GM12878 (cell line): ENCODE measurements at regions of chr1 and their contacts with region 1.

Region 1: GRCh38 chr1:63316984-63317816 is 5.2 kb upstream of the FOXD3 start:
- DNase-seq: no peak
- ATAC-seq: peak; percentile 96
- H3K4me3 ChIP-seq: peak overlapping the region; percentile 69
- H3K27ac ChIP-seq: no peak overlapping the region
- H3K4me1 ChIP-seq: no peaks in the 10 kb centered on the region
- H3K27me3 ChIP-seq: peaks cover 9 to 35% of the 10 kb centered on the region in 2 experiments
- CTCF ChIP-seq: peak; percentile 60 to 87 (median 66)
- EP300 ChIP-seq: no peak
- POLR2A ChIP-seq: no peak
- RAD21 ChIP-seq: peak; percentile 35; the same call in 1 of the 2 replicates

Region 2: DNA sequence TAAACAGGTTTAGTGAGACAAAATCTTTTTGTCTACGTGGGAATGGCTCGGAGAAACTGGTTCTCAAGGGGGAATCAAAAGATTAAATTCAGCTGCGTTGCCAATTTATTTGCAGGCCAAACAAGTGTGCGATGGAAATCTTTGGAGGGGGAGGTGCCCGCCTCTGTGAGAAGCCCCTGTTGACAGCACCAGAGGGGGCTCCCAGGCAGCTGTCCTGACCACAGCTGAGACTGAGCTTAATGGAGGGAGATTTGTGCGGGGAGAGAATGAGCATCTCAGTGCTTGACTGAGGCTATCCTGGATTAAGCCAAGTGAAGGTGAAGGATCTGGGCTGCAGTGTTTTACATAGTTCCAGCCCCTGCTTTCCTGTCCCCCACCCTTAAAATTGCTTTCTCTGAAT is 363.6 kb before region 1 on chr1:
- CTCF ChIA-PET with region 1: no interaction called
- POLR2A ChIA-PET with region 1: no interaction called
- RAD21 ChIA-PET with region 1: no interaction called
- SMC1A ChIA-PET with region 1: no interaction called
- in situ Hi-C with region 1: no loop called
- intact Hi-C with region 1: loop called (anchors 10 kb)
- DNase-seq: no peak
- ATAC-seq: no peak
- H3K4me3 ChIP-seq: no peak overlapping the region
- H3K27ac ChIP-seq: no peak overlapping the region
- H3K4me1 ChIP-seq: no peaks in the 10 kb centered on the region
- H3K27me3 ChIP-seq: 0 out of 4 replicates have a peak, but pooled peaks cover 0 to 3% of the 10 kb centered on the region in 2 experiments
- CTCF ChIP-seq: no peak
- EP300 ChIP-seq: no peak
- POLR2A ChIP-seq: no peak
- RAD21 ChIP-seq: no peak

Region 3: GRCh38 chr1:63522891-63523728 is 205.9 kb after region 1 on chr1 and contains the starts of genes EFCAB7 and ITGB3BP:
- CTCF ChIA-PET with region 1: no interaction called
- POLR2A ChIA-PET with region 1: no interaction called
- RAD21 ChIA-PET with region 1: no interaction called
- SMC1A ChIA-PET with region 1: no interaction called
- in situ Hi-C with region 1: no loop called
- intact Hi-C with region 1: no loop called
- DNase-seq: peak; percentile 77
- ATAC-seq: peak; percentile 89
- H3K4me3 ChIP-seq: peak within 1 kb of the TSS; percentile 83
- H3K27ac ChIP-seq: peak within 1 kb of the TSS; percentile 97
- H3K4me1 ChIP-seq: peaks cover 6% of the 10 kb centered on the region
- H3K27me3 ChIP-seq: no peaks in the 10 kb centered on the region
- CTCF ChIP-seq: no peak
- EP300 ChIP-seq: peak; percentile 28 to 47; a peak in 1 of 4 replicates
- POLR2A ChIP-seq: peak; percentile 75
- RAD21 ChIP-seq: no peak
- polyA plus RNA-seq, gene EFCAB7: 5.1 to 5.7 TPM
- polyA plus RNA-seq, gene ITGB3BP: 82.4 to 86.2 TPM